ENCODE measurements at regions of chr11 and their contacts with region 1.

Region 1: GRCh38 chr11:34427186-34427805 is 11.4 kb upstream of the CAT start:
- DNase-seq: peak; percentile 67 to 81 (median 75)
- H3K4me3 ChIP-seq: no peak overlapping the region
- H3K27ac ChIP-seq: no peak overlapping the region
- H3K4me1 ChIP-seq: peaks cover 34 to 83% (median 52%) of the 10 kb centered on the region in 4 experiments
- H3K27me3 ChIP-seq: no peaks in the 10 kb centered on the region

Region 2: GRCh38 chr11:34243726-34244464 is 183.4 kb before region 1 on chr11:
- CTCF ChIA-PET with region 1: no interaction called
- POLR2A ChIA-PET with region 1: no interaction called
- DNase-seq: no peak
- H3K4me3 ChIP-seq: no peak overlapping the region
- H3K27ac ChIP-seq: no peak overlapping the region
- H3K4me1 ChIP-seq: peaks cover 0 to 15% (median 0%) of the 10 kb centered on the region in 4 experiments
- H3K27me3 ChIP-seq: no peaks in the 10 kb centered on the region

Region 3: GRCh38 chr11:34313099-34313517 is 114.2 kb before region 1 on chr11:
- CTCF ChIA-PET with region 1: no interaction called
- POLR2A ChIA-PET with region 1: no interaction called
- DNase-seq: peak in 2 of 3 donors; percentile 17 to 40
- H3K4me3 ChIP-seq: no peak overlapping the region
- H3K27ac ChIP-seq: no peak overlapping the region
- H3K4me1 ChIP-seq: peaks cover 0 to 35% (median 1%) of the 10 kb centered on the region in 4 experiments
- H3K27me3 ChIP-seq: no peaks in the 10 kb centered on the region

Region 4: DNA sequence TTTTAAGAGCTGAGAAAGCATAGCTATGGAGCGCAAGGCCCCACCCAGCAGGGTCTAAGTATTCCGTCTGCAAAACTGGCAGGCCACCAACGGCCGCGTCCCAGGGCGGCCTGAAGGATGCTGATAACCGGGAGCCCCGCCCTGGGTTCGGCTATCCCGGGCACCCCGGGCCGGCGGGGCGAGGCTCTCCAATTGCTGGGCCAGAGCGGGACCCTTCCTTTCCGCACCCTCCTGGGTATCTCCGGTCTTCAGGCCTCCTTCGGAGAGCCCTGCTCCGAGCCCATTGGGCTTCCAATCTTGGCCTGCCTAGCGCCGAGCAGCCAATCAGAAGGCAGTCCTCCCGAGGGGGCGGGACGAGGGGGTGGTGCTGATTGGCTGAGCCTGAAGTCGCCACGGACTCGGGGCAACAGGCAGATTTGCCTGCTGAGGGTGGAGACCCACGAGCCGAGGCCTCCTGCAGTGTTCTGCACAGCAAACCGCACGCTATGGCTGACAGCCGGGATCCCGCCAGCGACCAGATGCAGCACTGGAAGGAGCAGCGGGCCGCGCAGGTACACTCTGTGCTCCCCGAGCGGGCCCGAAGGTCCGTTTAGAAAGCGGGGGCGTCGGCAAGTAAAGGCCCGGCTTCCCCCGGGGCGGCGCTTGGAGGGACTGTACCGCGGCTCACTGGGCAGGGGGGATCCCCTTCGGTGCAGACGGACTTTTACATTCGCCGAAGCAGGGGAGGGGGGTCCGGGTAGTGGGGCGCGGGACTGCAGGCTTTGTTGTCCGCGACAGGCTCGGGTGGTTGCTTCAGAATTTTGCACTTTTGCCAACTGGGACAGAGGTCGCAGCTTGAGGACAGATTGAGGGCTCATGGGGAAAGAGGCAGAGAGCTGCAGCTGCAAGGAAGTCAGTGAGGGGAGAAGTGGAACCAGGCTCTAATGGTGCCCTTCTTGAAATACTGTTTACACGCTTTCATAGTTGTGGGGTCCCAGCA is 11.5 kb after region 1 on chr11 and contains the start of gene CAT:
- CTCF ChIA-PET with region 1: interaction called, 23 read pairs
- POLR2A ChIA-PET with region 1: interaction called, 3 read pairs
- DNase-seq: peak; percentile 99 to 100 (median 99)
- H3K4me3 ChIP-seq: peak within 1 kb of the TSS; percentile 87 to 96 (median 95)
- H3K27ac ChIP-seq: peak within 1 kb of the TSS; percentile 80 to 91
- H3K4me1 ChIP-seq: peaks cover 21 to 42% (median 26%) of the 10 kb centered on the region in 4 experiments
- H3K27me3 ChIP-seq: no peaks in the 10 kb centered on the region